Sciatic nerve (tissue), 2 donors: ENCODE measurements at regions of chr5 and their contacts with region 1.

Region 1: DNA sequence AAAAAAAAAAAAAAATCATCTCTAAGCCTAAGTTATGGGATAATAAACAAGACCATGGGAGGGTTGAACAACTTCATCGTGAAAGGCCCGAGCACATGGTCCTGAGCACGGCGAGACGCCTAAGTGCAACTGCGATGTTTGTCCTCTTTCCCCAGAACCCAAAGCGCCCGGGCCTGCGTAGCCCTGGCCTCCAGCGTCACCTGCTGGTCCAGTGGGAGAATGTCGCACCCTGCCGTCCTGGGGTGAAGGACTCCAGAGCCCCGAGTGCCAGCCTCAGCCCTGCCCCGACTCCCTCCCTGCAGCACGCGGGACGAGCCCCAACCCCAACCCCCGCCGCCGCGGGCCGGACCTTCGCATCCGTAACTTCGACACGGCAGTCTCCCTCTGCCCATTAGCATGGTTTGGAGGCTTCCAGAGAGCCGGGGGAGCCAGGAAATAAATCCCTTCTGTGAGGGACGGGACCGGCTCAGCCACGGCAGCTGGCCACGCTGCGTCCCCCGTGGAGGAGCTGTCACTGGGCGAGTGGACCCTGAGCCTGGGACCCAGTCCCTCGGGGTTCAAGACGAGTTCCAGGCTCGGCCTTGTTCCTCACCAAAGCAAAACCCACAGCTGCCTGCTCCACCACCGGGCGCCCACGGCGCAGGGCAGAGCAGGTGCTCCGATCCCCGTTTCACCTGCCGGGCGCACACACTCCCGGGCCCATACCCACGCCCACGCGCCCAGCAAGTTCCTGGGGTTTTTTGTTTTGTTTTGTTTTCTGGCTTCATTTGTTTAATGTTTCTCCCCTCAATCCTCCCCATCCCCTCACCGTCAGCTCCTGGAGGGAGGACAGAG is 132.5 kb upstream of the HAND1 start:
- DNase-seq: peak; percentile 81
- ATAC-seq: peak; percentile 89

Region 2: GRCh38 chr5:154467655-154468354 is 142.7 kb before region 1 on chr5:
- intact Hi-C with region 1: loop called (anchors 5 kb)
- DNase-seq: peak; percentile 89
- ATAC-seq: peak; percentile 91